PC-9 (cell line): ENCODE measurements at regions of chr17 and their contacts with region 1.

Region 1: GRCh38 chr17:45135192-45135977 is at the start of gene ACBD4:
- DNase-seq: peak; percentile 95 to 96
- H3K4me3 ChIP-seq: peak within 1 kb of the TSS; percentile 70
- H3K27ac ChIP-seq: no peak within 1 kb of the TSS
- H3K4me1 ChIP-seq: peaks cover 22% of the 10 kb centered on the region
- H3K27me3 ChIP-seq: no peaks in the 10 kb centered on the region
- CTCF ChIP-seq: peak; percentile 100
- total RNA-seq, gene ACBD4: 14.6 and 19.5 TPM in 2 replicates

Region 2: GRCh38 chr17:44794851-44795413 is 340.5 kb before region 1 on chr17:
- CTCF ChIA-PET with region 1: interaction called, 11 read pairs
- POLR2A ChIA-PET with region 1: no interaction called
- intact Hi-C with region 1: no loop called
- DNase-seq: peak in 1 of 2 experiments; percentile 83
- H3K4me3 ChIP-seq: no peak overlapping the region
- H3K27ac ChIP-seq: peak overlapping the region; percentile 54
- H3K4me1 ChIP-seq: peaks cover 21% of the 10 kb centered on the region
- H3K27me3 ChIP-seq: no peaks in the 10 kb centered on the region
- CTCF ChIP-seq: no peak

Region 3: DNA sequence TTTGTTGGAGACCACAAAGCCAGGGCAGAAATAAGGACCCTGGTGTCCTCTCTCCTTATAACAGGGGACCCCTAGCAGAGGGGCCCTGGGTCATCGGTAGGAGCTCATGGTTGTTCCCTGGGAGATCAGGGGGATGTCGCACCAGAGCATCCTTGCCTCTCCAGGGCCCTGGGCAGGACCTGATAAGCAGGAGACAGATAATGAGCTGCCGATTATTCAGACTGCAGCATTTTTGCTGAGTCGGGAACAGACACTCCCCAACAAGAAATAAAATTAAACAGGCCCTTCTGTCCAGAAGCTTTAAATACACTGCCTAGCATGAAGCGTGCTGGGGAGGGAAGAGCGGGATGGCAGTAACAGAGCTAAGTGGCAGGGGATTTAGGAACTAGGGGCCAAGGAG is 204.7 kb before region 1 on chr17:
- CTCF ChIA-PET with region 1: interaction called, 10 read pairs
- POLR2A ChIA-PET with region 1: no interaction called
- intact Hi-C with region 1: no loop called
- DNase-seq: no peak
- H3K4me3 ChIP-seq: no peak overlapping the region
- H3K27ac ChIP-seq: no peak overlapping the region
- H3K4me1 ChIP-seq: no peaks in the 10 kb centered on the region
- H3K27me3 ChIP-seq: no peaks in the 10 kb centered on the region
- CTCF ChIP-seq: no peak

Region 4: GRCh38 chr17:45063198-45063597 is 72.2 kb before region 1 on chr17:
- CTCF ChIA-PET with region 1: no interaction called
- POLR2A ChIA-PET with region 1: no interaction called
- intact Hi-C with region 1: no loop called
- DNase-seq: no peak
- H3K4me3 ChIP-seq: no peak overlapping the region
- H3K27ac ChIP-seq: no peak overlapping the region
- H3K4me1 ChIP-seq: peaks cover 22% of the 10 kb centered on the region
- H3K27me3 ChIP-seq: no peaks in the 10 kb centered on the region
- CTCF ChIP-seq: no peak

Region 5: DNA sequence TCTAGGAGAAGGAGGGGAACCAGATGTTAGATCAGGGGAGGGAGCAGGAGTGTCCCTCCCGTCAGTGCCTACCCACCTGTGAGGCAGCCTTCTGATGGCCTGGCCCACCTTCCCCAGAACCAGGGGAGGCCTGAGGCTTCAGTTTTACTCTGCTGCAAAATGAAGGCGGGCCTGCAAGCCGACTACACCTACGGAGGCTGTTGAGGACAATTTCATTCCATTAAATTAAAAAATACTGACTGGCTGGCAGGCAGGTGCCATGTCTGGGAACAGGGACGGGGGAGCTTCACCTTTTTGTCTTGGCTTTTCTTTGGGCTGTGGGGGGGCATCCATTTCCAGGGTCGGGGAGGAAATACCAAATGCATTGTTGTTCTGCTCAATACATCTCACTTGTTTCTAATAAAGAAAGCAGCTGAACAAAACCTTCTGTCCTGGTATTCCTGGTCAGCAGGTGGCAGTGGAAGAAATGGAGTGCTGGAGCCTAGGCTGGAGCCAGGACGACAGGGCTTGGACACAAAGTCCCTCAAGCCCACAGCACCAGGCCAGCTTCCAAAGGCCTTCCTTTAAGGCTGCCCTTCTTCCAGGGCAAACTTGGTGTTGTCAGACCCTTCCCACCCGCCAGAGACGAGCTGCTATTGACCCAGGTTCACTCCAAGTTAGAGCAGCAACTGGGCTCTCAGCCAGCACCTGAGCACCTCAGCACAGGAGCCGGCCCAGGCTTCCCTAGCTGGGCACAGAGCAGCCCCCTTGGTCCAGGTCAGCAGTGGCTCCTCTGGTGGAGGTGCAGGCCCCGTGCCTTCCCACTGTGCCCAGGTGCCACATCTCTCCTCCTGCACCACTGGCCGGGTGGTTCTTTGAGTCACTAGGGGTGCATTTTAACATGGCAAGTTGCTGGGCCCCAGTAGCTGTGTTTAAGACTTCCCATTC is 26.5 kb before region 1 on chr17:
- CTCF ChIA-PET with region 1: interaction called, 3 read pairs
- POLR2A ChIA-PET with region 1: interaction called, 11 read pairs
- intact Hi-C with region 1: no loop called
- DNase-seq: no peak
- H3K4me3 ChIP-seq: no peak overlapping the region
- H3K27ac ChIP-seq: no peak overlapping the region
- H3K4me1 ChIP-seq: no peaks in the 10 kb centered on the region
- H3K27me3 ChIP-seq: no peaks in the 10 kb centered on the region
- CTCF ChIP-seq: no peak; the same call in 1 of the 2 replicates

Region 6: DNA sequence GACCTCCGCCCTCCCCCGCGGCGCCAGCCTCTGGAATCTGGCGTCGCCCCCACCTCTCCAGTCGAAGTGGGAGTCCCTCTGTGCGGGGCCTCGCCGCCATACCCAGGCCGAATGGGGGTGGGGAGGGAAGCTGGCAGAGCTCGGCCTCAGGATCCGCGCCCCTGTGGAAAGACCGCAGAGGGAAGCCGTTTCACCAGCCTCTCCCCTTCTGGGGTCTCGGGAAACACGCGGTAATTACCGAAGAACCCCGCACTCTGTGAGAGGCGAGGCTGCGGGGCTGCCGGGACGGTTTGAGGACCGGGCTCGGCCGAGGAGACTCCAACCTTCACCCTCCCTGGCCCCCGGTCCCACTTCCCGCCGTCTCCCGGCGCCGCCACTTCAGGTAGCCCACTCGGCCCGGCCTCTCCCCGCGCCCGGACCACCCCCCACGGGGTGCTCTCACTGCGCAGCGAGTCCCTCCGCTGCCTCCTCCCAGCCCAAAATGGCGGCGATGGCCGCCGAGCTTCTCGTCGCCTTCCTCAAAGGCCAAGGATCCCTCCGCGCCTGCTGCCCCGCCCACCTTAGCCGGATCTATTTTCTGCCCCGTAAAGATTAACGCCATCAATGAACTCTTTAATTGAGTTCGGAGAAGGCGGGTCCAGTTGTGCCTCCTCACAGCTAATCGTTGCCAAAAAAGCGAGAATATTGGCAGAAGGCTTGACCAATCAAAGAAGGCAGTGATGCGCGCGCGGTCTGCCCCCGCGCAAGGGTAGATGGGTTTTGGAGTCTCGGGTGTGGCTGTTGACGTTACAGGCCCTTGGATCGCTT is 25.8 kb after region 1 on chr17:
- CTCF ChIA-PET with region 1: interaction called, 26 read pairs
- POLR2A ChIA-PET with region 1: no interaction called
- intact Hi-C with region 1: no loop called
- DNase-seq: peak; percentile 98 to 99
- H3K4me3 ChIP-seq: peak overlapping the region; percentile 73
- H3K27ac ChIP-seq: peak overlapping the region; percentile 93
- H3K4me1 ChIP-seq: peaks cover 55% of the 10 kb centered on the region
- H3K27me3 ChIP-seq: no peaks in the 10 kb centered on the region
- CTCF ChIP-seq: no peak; the same call in 1 of the 2 replicates

Region 7: DNA sequence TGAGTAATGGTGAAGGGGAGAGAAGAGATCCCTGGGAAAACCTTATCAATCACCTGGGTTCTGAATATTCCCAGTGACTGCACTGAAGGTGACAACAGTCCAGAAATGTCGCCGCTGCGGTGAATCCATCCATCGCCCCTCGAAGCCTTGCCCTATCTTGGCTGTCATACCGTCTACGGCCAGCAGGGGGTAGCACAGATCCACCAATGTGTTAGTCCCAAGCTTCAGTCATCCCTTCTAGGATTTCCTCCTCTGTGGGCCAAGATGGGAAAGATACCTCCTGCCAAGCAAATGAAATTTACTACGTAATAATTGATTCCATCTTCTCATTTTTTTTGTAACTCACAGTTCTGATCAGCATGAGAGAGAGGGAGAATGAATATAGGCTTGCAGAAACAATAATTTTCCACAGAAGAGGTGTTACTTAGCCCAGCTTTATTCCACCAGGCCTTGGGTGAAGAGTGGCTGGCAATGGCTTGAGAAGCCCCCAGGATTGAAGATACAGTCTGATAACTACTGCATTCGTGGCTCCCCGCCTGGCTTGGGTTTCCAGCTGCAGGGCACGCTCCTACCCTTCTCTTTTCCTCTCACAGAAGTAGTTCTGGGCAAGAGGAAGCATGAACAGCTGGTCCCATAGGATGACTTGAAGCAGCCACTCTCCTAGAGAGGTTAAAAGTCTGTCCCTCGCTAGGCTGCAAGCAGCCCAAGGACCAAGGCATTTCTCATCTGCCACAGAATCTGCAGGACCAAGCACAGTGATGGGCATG is 83.7 kb after region 1 on chr17:
- CTCF ChIA-PET with region 1: interaction called, 9 read pairs
- POLR2A ChIA-PET with region 1: interaction called, 14 read pairs
- intact Hi-C with region 1: no loop called
- DNase-seq: peak; percentile 57 to 80
- H3K4me3 ChIP-seq: no peak overlapping the region
- H3K27ac ChIP-seq: no peak overlapping the region
- H3K4me1 ChIP-seq: peaks cover 8% of the 10 kb centered on the region; the same call in 1 of the 2 replicates
- H3K27me3 ChIP-seq: no peaks in the 10 kb centered on the region
- CTCF ChIP-seq: peak; percentile 98

Region 8: GRCh38 chr17:45317112-45317928 is 181.9 kb after region 1 on chr17:
- CTCF ChIA-PET with region 1: interaction called, 8 read pairs
- POLR2A ChIA-PET with region 1: interaction called, 3 read pairs
- intact Hi-C with region 1: loop called (anchors 10 kb)
- DNase-seq: peak; percentile 99 to 100
- H3K4me3 ChIP-seq: peak overlapping the region; percentile 68
- H3K27ac ChIP-seq: peak overlapping the region; percentile 95
- H3K4me1 ChIP-seq: peaks cover 81% of the 10 kb centered on the region
- H3K27me3 ChIP-seq: no peaks in the 10 kb centered on the region
- CTCF ChIP-seq: no peak

Region 9: DNA sequence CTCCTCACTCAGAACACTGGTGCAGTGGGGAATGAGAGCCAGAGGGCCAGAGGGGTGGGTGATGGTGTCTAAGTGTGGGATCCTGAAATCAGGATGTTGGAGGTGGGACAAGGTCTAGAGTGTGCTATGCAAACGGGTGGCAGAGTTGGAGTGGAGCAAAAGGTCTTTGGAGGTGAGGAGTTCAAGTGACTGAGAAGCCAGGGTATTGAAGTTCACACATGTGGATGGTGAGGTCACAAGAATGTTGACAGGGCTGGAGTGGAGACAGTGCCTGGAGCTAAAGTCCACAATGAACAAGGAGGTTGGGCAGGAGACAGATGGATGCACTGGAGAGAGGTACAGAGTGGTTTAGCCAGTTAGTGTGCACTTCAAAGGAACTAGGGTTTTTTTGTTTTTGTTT is 219.7 kb after region 1 on chr17:
- CTCF ChIA-PET with region 1: no interaction called
- POLR2A ChIA-PET with region 1: no interaction called
- intact Hi-C with region 1: no loop called
- DNase-seq: peak; percentile 42 to 81
- H3K4me3 ChIP-seq: no peak overlapping the region
- H3K27ac ChIP-seq: no peak overlapping the region
- H3K4me1 ChIP-seq: peaks cover 17% of the 10 kb centered on the region
- H3K27me3 ChIP-seq: no peaks in the 10 kb centered on the region
- CTCF ChIP-seq: no peak